GM12878 (cell line): ENCODE measurements at regions of chr10 and their contacts with region 1.

Region 1: DNA sequence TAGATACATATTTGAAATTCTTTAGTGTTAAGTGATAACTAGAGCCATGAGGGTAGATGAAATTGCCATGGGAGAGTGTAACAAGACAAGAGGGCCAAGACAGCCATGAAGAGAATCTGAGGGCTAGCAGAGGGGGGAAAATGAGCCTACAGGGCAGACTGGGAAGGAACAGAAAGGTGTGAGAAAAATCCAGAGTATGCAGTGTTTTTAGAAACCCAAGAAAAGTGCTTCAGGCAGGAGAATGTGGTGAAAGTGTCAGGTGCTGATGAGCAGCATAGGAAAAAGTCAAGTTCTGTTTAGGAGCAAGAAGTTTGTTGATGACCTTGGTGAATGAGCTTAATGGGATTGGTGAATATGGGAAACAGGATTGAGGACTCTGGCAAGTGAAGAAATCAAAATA is 63.1 kb downstream of the MAPK8 start:
- DNase-seq: no peak
- ATAC-seq: no peak
- H3K4me3 ChIP-seq: no peak overlapping the region
- H3K27ac ChIP-seq: no peak overlapping the region
- H3K4me1 ChIP-seq: no peaks in the 10 kb centered on the region
- H3K27me3 ChIP-seq: no peaks in the 10 kb centered on the region
- CTCF ChIP-seq: no peak
- EP300 ChIP-seq: no peak
- POLR2A ChIP-seq: no peak
- RAD21 ChIP-seq: no peak

Region 2: GRCh38 chr10:48282829-48283228 is 86.7 kb before region 1 on chr10:
- CTCF ChIA-PET with region 1: no interaction called
- POLR2A ChIA-PET with region 1: no interaction called
- RAD21 ChIA-PET with region 1: no interaction called
- SMC1A ChIA-PET with region 1: no interaction called
- in situ Hi-C with region 1: no loop called
- intact Hi-C with region 1: no loop called
- DNase-seq: peak; percentile 89
- ATAC-seq: peak; percentile 66
- H3K4me3 ChIP-seq: no peak overlapping the region
- H3K27ac ChIP-seq: peak overlapping the region; percentile 86
- H3K4me1 ChIP-seq: peaks cover 52% of the 10 kb centered on the region
- H3K27me3 ChIP-seq: no peaks in the 10 kb centered on the region
- CTCF ChIP-seq: no peak
- EP300 ChIP-seq: peak; percentile 18 to 47; a peak in 1 of 4 replicates
- POLR2A ChIP-seq: 0 out of 2 replicates have a peak, but pooled peaks have one; percentile 22
- RAD21 ChIP-seq: no peak

Region 3: DNA sequence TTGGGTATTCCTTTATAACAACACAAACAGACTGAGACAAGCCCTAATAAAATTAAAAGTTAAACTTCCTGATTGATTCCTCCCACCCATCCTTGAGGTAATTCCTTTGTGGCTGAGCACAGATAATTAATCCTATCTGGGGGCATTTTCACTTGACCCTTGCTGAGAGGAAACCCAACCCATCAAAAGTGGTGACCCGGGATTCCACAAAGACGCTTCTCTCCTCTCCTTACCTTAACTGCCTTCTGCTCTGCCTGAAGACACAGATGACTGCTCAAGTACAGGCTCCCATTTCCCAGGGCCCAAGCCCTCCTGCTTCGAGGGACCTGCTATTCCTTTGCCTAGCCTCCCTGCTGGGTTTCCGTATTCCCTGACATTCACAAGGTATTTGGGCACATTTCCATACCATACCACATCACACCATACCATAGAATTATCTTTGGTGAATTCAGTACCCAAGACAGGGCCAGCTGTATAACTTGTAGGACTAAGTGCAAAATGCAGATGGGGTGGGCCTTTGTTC is 72.9 kb before region 1 on chr10:
- CTCF ChIA-PET with region 1: no interaction called
- POLR2A ChIA-PET with region 1: no interaction called
- RAD21 ChIA-PET with region 1: no interaction called
- SMC1A ChIA-PET with region 1: no interaction called
- in situ Hi-C with region 1: no loop called
- intact Hi-C with region 1: no loop called
- DNase-seq: no peak
- ATAC-seq: no peak
- H3K4me3 ChIP-seq: no peak overlapping the region
- H3K27ac ChIP-seq: no peak overlapping the region
- H3K4me1 ChIP-seq: no peaks in the 10 kb centered on the region
- H3K27me3 ChIP-seq: no peaks in the 10 kb centered on the region
- CTCF ChIP-seq: no peak
- EP300 ChIP-seq: no peak
- POLR2A ChIP-seq: no peak
- RAD21 ChIP-seq: no peak

Region 4: GRCh38 chr10:48383388-48383787 is 13.8 kb after region 1 on chr10:
- CTCF ChIA-PET with region 1: interaction called, 26 read pairs
- POLR2A ChIA-PET with region 1: no interaction called
- RAD21 ChIA-PET with region 1: interaction called, 9 read pairs
- SMC1A ChIA-PET with region 1: interaction called, 12 read pairs
- in situ Hi-C with region 1: no loop called
- intact Hi-C with region 1: no loop called
- DNase-seq: no peak
- ATAC-seq: no peak
- H3K4me3 ChIP-seq: no peak overlapping the region
- H3K27ac ChIP-seq: no peak overlapping the region
- H3K4me1 ChIP-seq: no peaks in the 10 kb centered on the region
- H3K27me3 ChIP-seq: no peaks in the 10 kb centered on the region
- CTCF ChIP-seq: no peak
- EP300 ChIP-seq: no peak
- POLR2A ChIP-seq: no peak
- RAD21 ChIP-seq: no peak